PC-3 (cell line): ENCODE measurements at regions of chr6 and their contacts with region 1.

Region 1: GRCh38 chr6:122839477-122839876 is 50.4 kb downstream of the SMPDL3A start:
- DNase-seq: peak; percentile 78
- ATAC-seq: peak; percentile 83
- H3K4me3 ChIP-seq: no peak overlapping the region
- H3K27ac ChIP-seq: no peak overlapping the region
- H3K4me1 ChIP-seq: no peaks in the 10 kb centered on the region
- H3K27me3 ChIP-seq: no peaks in the 10 kb centered on the region
- CTCF ChIP-seq: peak; percentile 69

Region 2: DNA sequence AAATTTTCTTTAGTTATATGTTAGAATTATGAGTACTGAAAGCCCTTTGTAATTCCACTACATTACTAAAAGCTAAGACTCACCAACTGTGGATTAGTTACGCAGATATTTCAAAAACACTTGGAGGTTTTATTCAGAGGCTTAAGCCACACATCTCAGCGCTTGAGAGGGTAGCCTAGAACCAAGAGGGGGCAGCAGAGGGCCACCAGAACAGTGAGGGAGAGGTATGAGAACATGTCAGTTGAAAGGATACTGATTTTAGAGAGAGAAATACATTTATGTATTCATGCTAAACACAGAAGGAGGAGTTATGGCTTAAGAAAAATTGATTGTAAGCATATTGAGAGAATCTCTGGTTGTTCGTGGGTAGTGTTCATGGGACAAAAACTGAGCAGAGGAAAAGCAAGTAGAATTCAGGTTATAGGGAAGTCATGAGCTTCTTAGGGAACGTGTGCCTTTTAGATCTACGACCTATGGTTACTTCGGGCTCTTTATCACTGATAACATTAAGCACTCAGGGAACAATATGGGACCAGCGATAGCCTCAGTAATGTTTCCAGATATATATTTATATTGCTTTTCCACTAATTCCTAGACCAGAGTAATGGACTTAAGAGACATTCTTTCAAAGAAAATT is 347.4 kb before region 1 on chr6:
- CTCF ChIA-PET with region 1: interaction called, 8 read pairs
- POLR2A ChIA-PET with region 1: no interaction called
- intact Hi-C with region 1: loop called (anchors 5 kb)
- DNase-seq: peak; percentile 80
- ATAC-seq: peak; percentile 98
- H3K4me3 ChIP-seq: no peak overlapping the region
- H3K27ac ChIP-seq: no peak overlapping the region
- H3K4me1 ChIP-seq: peaks cover 15% of the 10 kb centered on the region
- H3K27me3 ChIP-seq: no peaks in the 10 kb centered on the region
- CTCF ChIP-seq: peak; percentile 93

Region 3: GRCh38 chr6:122730775-122731386 is 108.6 kb before region 1 on chr6:
- CTCF ChIA-PET with region 1: interaction called, 9 read pairs
- POLR2A ChIA-PET with region 1: interaction called, 8 read pairs
- intact Hi-C with region 1: loop called (anchors 1 kb)
- DNase-seq: peak; percentile 44
- ATAC-seq: no peak
- H3K4me3 ChIP-seq: no peak overlapping the region
- H3K27ac ChIP-seq: no peak overlapping the region
- H3K4me1 ChIP-seq: 0 out of 2 replicates have a peak, but pooled peaks cover 5% of the 10 kb centered on the region
- H3K27me3 ChIP-seq: no peaks in the 10 kb centered on the region
- CTCF ChIP-seq: peak; percentile 74

Region 4: DNA sequence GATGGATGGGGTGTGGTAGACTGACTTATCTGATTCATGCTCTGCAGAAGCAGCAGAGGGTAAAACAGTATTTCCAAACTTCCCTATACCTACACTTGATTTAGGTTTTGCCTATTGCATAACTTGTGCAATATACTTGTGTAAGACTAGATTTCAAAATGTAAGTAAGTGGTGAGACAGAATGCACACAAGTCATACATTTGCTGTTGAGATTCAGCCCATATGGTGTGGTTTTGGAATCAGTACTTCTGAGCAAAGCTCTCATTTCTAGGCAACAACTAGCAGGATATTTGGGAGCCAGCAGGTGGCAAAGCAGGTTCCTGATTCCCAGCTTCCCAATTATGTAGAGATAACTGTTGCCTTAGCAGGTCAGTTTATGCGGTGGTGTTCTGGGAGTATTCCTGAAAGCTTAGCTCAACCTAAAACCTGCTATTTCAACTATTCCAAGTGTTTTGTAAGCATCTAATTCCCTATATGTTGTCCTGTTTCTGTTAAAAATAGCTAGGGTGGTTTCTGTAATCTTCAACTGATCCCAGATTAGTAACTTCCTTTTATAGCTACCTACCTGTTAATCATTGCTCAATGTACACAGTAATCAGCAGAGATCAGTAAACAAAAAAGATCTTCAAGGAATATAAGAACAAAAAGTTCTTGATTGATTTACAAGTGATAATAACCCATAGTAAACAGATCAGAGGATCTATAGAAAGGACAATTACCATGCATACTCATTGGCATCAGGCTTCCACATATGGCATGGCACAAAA is 68.5 kb before region 1 on chr6:
- CTCF ChIA-PET with region 1: interaction called, 10 read pairs
- POLR2A ChIA-PET with region 1: no interaction called
- intact Hi-C with region 1: loop called (anchors 1 kb)
- DNase-seq: peak; percentile 40
- ATAC-seq: peak; percentile 78
- H3K4me3 ChIP-seq: no peak overlapping the region
- H3K27ac ChIP-seq: no peak overlapping the region
- H3K4me1 ChIP-seq: no peaks in the 10 kb centered on the region
- H3K27me3 ChIP-seq: no peaks in the 10 kb centered on the region
- CTCF ChIP-seq: peak; percentile 57

Region 5: GRCh38 chr6:122956376-122956775 is 116.9 kb after region 1 on chr6:
- CTCF ChIA-PET with region 1: no interaction called
- POLR2A ChIA-PET with region 1: no interaction called
- intact Hi-C with region 1: no loop called
- DNase-seq: no peak
- ATAC-seq: no peak
- H3K4me3 ChIP-seq: no peak overlapping the region
- H3K27ac ChIP-seq: no peak overlapping the region
- H3K4me1 ChIP-seq: no peaks in the 10 kb centered on the region
- H3K27me3 ChIP-seq: no peaks in the 10 kb centered on the region
- CTCF ChIP-seq: no peak

Region 6: GRCh38 chr6:122984393-122984792 is 144.9 kb after region 1 on chr6:
- CTCF ChIA-PET with region 1: no interaction called
- POLR2A ChIA-PET with region 1: no interaction called
- intact Hi-C with region 1: no loop called
- DNase-seq: no peak
- ATAC-seq: no peak
- H3K4me3 ChIP-seq: no peak overlapping the region
- H3K27ac ChIP-seq: no peak overlapping the region
- H3K4me1 ChIP-seq: no peaks in the 10 kb centered on the region
- H3K27me3 ChIP-seq: 0 out of 2 replicates have a peak, but pooled peaks cover 5% of the 10 kb centered on the region
- CTCF ChIP-seq: no peak